ENCODE measurements at regions of chr17 and their contacts with region 1.

Region 1: DNA sequence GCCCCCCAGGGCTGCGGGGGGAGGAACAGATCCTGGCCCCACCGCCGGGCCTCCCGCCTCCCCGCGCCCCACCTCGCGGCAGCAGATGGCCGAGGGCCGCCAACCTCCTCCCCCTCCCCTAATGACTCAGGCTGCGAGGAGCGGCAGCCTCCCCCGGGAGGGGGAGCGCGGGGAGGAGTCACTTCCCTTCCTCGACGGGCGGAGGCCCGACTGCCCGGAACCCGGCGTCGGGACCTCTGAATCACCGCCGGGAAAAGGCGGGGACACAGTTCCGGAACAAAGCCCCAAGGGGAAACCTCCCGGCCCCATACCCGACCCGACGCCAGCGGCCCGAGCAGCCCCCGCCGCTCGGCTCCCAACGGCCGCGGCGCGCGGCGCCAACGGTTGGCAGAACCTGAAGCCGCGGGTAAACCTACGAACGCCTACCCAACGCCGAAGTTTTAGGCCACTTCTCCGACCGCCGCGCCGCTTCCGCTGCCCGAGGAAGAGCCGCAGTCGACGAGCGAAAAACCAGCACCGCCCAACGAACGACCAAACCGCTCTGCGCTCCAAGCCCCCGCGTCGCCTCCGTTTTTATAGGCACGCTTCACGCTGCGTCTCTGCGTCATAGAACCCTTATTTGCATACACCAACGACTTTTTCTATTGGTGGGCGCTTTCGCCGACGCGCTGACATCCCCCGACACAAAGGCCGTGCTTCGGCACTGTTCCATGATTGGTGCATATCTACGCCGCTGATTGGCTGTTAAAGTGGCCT is 5.2 kb upstream of the UNK start:
- DNase-seq: peak; percentile 95

Region 2: GRCh38 chr17:75738218-75738802 is 41.1 kb before region 1 on chr17:
- CTCF ChIA-PET with region 1: no interaction called
- POLR2A ChIA-PET with region 1: interaction called, 10 read pairs
- DNase-seq: no peak

Region 3: DNA sequence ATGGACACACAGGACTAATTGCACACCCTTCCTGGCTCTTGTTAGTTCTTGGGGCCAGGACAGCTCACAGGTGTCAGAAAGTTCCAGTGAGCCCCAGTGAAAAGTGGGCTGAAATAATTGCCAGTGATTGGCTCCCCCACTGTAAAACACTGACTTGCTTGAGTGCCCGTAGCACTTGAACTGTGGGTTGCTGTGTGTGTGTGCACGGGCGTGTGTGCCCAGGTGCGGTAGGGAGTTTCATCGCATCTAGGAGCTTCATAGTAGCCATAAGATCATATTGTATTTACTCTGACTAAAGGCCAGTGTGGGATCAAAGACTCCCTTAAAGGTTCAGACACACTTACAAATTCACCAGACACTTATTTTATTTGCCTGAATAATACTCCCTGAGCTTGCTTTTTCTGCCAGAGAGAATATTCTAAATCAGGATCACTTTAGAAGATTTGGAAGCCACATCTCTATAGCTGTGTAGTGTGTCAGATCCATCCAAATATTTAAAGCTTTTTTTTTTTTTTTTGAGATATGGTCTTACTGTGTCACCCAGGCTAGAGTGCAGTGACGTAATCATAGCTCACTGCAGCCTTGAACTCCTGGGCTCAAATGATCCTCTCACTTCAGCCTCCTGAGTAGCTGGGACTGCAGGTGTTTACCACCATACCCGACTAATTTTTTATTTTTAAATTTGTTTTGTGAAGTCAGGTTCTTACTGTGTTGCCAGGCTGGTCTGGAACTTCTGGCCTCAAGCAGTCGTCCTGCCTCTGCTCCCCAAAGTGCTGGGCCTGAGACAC is 16.6 kb after region 1 on chr17:
- CTCF ChIA-PET with region 1: interaction called, 7 read pairs
- POLR2A ChIA-PET with region 1: interaction called, 34 read pairs
- DNase-seq: no peak

Region 4: GRCh38 chr17:75808905-75809715 is 29.7 kb after region 1 on chr17:
- CTCF ChIA-PET with region 1: no interaction called
- POLR2A ChIA-PET with region 1: interaction called, 20 read pairs
- DNase-seq: no peak

Region 5: GRCh38 chr17:75827252-75828115 is 48.1 kb after region 1 on chr17:
- CTCF ChIA-PET with region 1: interaction called, 9 read pairs
- POLR2A ChIA-PET with region 1: interaction called, 23 read pairs
- DNase-seq: peak; percentile 91

Region 6: DNA sequence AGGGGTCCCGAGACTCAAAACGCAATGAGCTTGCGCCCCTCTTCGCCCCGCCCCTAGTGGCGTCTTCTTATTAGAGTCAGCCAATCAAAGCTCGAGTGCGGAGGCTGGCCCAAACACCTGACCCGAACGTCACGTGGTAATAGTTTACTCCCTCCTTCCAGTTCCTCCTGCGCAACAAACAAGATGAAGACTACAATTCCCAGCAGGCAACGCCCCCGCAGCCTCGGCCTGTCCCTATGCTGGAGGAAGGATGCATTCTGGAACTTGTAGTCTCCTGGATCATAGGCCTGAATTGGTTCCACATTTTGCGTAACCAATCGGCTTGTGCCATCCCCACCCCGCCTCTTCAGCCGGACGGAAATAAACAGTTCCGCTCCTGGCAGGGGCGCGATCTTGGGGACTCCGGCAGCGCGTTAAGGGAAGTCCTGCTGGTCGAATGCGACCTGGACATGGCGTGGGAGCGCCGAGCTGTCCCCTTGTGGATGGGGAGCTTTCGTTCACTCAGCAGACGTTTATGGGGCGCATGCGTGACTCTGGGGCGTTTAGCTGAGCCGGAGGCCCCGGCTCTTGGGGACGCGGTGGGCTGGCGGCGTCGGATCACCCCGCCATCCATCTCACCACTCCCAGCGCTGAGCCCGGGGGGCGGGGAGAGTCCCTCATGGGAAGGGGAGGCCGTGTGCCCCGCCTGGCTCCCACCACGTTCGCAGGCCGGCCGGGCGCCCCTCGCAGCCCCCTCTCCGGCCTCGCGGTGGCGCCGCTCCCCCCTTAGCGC is 76.1 kb after region 1 on chr17 and contains the start of gene WBP2:
- CTCF ChIA-PET with region 1: interaction called, 4 read pairs
- POLR2A ChIA-PET with region 1: interaction called, 32 read pairs
- DNase-seq: peak; percentile 98

Measured in HEK293T (cell line).